Stomach (tissue), 19 donors: ENCODE measurements at regions of chr18 and their contacts with region 1.

Region 1: GRCh38 chr18:58386780-58387179 is 242.1 kb downstream of the ALPK2 start:
- DNase-seq: no peak
- H3K4me3 ChIP-seq: no peak overlapping the region
- H3K27ac ChIP-seq: no peak overlapping the region
- H3K4me1 ChIP-seq: peaks cover 0 to 19% (median 2%) of the 10 kb centered on the region in 4 donors
- H3K27me3 ChIP-seq: no peaks in the 10 kb centered on the region
- CTCF ChIP-seq: no peak
- EP300 ChIP-seq: no peak
- POLR2A ChIP-seq: no peak

Region 2: GRCh38 chr18:57998461-57998860 is 388.3 kb before region 1 on chr18:
- intact Hi-C with region 1: no loop called
- DNase-seq: no peak
- H3K4me3 ChIP-seq: no peak overlapping the region
- H3K27ac ChIP-seq: no peak overlapping the region
- H3K4me1 ChIP-seq: no peaks in the 10 kb centered on the region
- H3K27me3 ChIP-seq: no peaks in the 10 kb centered on the region
- CTCF ChIP-seq: no peak
- EP300 ChIP-seq: no peak
- POLR2A ChIP-seq: no peak

Region 3: GRCh38 chr18:58221060-58221725 is 165.6 kb before region 1 on chr18:
- intact Hi-C with region 1: no loop called
- DNase-seq: peak; percentile 84 to 93
- H3K4me3 ChIP-seq: peak overlapping the region; percentile 33 to 43 (median 38)
- H3K27ac ChIP-seq: peak overlapping the region; percentile 87 to 95 (median 89)
- H3K4me1 ChIP-seq: peaks cover 7 to 44% (median 27%) of the 10 kb centered on the region in 4 donors
- H3K27me3 ChIP-seq: no peaks in the 10 kb centered on the region
- CTCF ChIP-seq: no peak
- EP300 ChIP-seq: no peak
- POLR2A ChIP-seq: peak in 2 of 4 donors; percentile 84 to 87

Region 4: GRCh38 chr18:58338961-58339592 is 47.7 kb before region 1 on chr18:
- intact Hi-C with region 1: loop called (anchors 5 kb)
- DNase-seq: peak; percentile 48 to 86
- H3K4me3 ChIP-seq: no peak overlapping the region
- H3K27ac ChIP-seq: peak overlapping the region in 4 of 5 donors; percentile 38 to 57 (median 40)
- H3K4me1 ChIP-seq: peaks cover 19 to 31% (median 28%) of the 10 kb centered on the region in 4 donors
- H3K27me3 ChIP-seq: no peaks in the 10 kb centered on the region
- CTCF ChIP-seq: no peak
- EP300 ChIP-seq: no peak
- POLR2A ChIP-seq: no peak